ENCODE measurements at regions of chr16 and their contacts with region 1.

Region 1: DNA sequence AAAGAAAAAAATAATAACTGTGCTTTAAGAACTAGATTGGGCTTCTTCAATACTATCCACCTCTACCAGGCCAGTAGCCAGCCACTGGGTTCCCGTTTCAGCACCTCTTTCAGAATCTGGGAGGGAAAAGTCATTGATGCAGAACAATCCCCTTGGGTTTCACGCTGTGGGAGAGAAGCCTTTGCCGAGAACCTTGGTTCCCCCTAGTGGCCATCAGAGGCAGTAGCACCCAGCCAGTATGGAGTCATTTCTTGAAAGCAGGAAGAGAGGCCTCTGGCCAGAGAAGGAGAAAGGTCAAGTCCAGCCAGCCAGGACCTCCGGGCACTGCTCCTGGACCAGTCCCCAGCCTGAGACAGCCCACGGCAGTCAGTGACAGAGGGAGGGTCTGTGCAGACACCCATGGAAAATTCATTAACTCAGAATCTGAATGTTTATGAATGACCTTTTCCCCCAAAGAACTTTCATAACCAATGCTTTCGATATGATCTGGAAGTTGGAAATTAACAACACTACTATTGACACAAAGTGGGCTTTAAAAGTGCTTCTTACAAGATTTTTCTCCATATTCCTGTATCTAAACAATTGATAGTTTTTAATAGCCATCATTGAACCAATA is 51.2 kb upstream of the CDH5 start:
- DNase-seq: peak; percentile 29 to 76
- H3K4me3 ChIP-seq: no peak overlapping the region
- H3K27ac ChIP-seq: no peak overlapping the region
- H3K4me1 ChIP-seq: no peaks in the 10 kb centered on the region
- H3K27me3 ChIP-seq: no peaks in the 10 kb centered on the region
- CTCF ChIP-seq: peak; percentile 92 to 97 (median 92)
- EP300 ChIP-seq: no peak
- POLR2A ChIP-seq: no peak
- RAD21 ChIP-seq: peak; percentile 89 to 90

Region 2: DNA sequence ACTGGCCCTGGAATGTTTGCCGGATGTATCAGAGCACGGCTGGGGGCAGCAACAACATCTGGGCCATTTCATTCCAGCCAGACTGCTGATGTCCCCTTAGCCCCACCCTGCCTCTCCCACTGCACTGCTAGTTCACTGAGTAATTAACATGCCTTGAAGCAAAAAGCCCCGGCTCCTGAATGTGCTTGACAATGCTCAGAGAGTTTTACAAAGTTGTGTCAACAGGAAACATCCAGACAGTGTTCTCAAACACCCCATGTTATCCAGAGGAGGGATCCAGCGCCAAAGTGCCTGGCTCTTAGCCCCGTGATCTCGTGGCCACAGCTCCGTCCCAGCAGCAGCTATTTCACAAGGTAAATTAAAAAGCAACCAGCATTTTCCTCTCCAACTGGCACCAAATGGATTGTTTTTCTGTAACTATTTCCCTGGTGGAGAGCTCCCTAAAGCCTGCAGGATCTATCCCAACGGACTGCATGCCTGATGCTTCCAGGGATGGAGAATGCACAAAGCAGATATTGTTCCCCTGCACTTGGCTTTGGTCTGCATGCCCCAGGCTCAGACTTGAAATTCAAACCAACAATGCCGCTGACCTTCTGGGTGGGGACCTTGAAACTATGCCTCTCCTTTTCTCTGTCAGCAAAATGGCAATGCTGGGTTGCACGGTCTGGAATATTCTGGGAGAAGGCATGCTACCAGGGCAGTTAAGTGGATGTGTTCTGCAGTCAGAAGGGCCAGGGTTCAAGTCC is 64.5 kb before region 1 on chr16:
- CTCF ChIA-PET with region 1: no interaction called
- POLR2A ChIA-PET with region 1: no interaction called
- DNase-seq: no peak
- H3K4me3 ChIP-seq: no peak overlapping the region
- H3K27ac ChIP-seq: no peak overlapping the region
- H3K4me1 ChIP-seq: no peaks in the 10 kb centered on the region
- H3K27me3 ChIP-seq: no peaks in the 10 kb centered on the region
- CTCF ChIP-seq: no peak
- EP300 ChIP-seq: no peak
- POLR2A ChIP-seq: no peak
- RAD21 ChIP-seq: no peak

Region 3: DNA sequence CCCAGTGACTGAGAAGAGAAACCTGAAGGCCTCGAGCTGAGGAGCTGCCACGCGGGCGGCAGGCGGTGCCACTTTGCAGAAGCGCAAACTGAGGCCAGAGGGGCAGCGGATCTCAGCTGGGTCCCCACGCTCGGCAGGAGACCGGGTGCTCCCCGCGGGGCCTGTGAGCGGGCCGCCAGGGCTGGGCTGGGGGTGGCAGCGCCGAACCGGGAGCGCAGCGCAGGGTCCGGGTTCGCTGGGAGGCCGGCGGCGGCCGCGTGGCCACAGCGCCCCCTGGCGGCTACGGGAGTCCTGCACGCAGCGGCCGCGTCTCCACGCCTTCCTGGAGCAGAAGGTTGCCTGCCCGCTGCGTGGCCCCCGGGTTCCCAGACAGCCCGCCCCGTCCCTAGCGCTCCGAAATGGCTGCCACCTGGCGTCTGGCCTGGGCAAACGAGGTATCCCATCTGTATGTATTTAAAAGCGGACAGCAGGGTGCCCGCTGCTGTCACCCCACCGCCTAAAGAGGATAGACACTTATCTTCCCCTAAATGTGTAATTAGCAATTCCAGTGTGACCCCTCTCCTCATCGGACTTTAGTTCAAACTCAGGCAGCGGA is 44.9 kb before region 1 on chr16:
- CTCF ChIA-PET with region 1: interaction called, 30 read pairs
- POLR2A ChIA-PET with region 1: no interaction called
- DNase-seq: peak; percentile 51 to 94
- H3K4me3 ChIP-seq: peak overlapping the region; percentile 27 to 64 (median 29); a peak in 6 of 8 replicates
- H3K27ac ChIP-seq: no peak overlapping the region
- H3K4me1 ChIP-seq: peaks cover 0 to 10% (median 6%) of the 10 kb centered on the region in 4 experiments; a peak in 5 of 7 replicates
- H3K27me3 ChIP-seq: peaks cover 0 to 10% (median 3%) of the 10 kb centered on the region in 4 experiments; a peak in 5 of 7 replicates
- CTCF ChIP-seq: peak; percentile 90 to 96 (median 91)
- EP300 ChIP-seq: peak in 1 of 2 experiments; percentile 78; a peak in 1 of 3 replicates
- POLR2A ChIP-seq: no peak
- RAD21 ChIP-seq: peak; percentile 85 to 89

Region 4: DNA sequence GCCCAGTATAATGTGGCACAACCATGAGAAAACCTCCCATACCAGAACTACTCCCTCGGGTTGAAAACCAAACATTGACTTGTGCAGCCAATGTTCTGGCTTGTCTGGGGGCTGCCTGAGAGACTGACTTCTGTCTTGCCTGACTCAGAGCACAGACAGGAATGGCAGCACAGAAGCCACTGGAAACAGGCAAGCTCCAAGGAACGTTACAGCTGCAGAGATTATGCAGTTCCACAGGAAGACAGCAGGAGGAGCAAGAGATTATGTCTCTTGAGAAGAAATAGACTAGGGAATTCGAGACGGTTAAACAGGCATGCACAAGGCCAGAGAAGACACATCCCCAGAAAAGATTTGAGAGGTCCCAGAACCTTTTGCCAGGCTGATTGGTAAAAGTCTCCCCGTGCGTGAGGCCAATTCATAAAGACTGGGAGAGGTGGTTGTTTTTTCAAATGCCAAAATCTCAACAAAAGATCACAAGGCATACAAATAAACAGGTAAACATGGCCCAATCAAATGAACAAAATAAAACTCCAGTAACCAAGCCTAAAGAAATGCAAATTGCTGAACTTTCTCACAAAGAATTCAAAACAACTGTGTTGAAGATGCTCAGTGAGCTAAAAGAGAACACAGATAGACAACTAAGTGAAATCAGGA is 39.4 kb before region 1 on chr16:
- CTCF ChIA-PET with region 1: interaction called, 30 read pairs
- POLR2A ChIA-PET with region 1: no interaction called
- DNase-seq: peak; percentile 50 to 77
- H3K4me3 ChIP-seq: no peak overlapping the region
- H3K27ac ChIP-seq: no peak overlapping the region
- H3K4me1 ChIP-seq: peaks cover 0 to 5% (median 2%) of the 10 kb centered on the region in 4 experiments; a peak in 3 of 7 replicates
- H3K27me3 ChIP-seq: peaks cover 0 to 7% (median 1%) of the 10 kb centered on the region in 4 experiments; a peak in 3 of 7 replicates
- CTCF ChIP-seq: peak; percentile 11 to 83 (median 76)
- EP300 ChIP-seq: no peak
- POLR2A ChIP-seq: no peak
- RAD21 ChIP-seq: peak; percentile 61 to 73

Region 5: GRCh38 chr16:66295761-66296520 is 19.4 kb before region 1 on chr16:
- CTCF ChIA-PET with region 1: interaction called, 10 read pairs
- POLR2A ChIA-PET with region 1: no interaction called
- DNase-seq: no peak
- H3K4me3 ChIP-seq: no peak overlapping the region
- H3K27ac ChIP-seq: no peak overlapping the region
- H3K4me1 ChIP-seq: no peaks in the 10 kb centered on the region
- H3K27me3 ChIP-seq: no peaks in the 10 kb centered on the region
- CTCF ChIP-seq: no peak
- EP300 ChIP-seq: no peak
- POLR2A ChIP-seq: no peak
- RAD21 ChIP-seq: no peak

Region 6: GRCh38 chr16:66326991-66327513 is 11.7 kb after region 1 on chr16:
- CTCF ChIA-PET with region 1: interaction called, 14 read pairs
- POLR2A ChIA-PET with region 1: no interaction called
- DNase-seq: no peak
- H3K4me3 ChIP-seq: no peak overlapping the region
- H3K27ac ChIP-seq: no peak overlapping the region
- H3K4me1 ChIP-seq: peaks cover 2 to 10% (median 4%) of the 10 kb centered on the region in 4 experiments; a peak in 6 of 7 replicates
- H3K27me3 ChIP-seq: no peaks in the 10 kb centered on the region
- CTCF ChIP-seq: no peak
- EP300 ChIP-seq: no peak
- POLR2A ChIP-seq: no peak
- RAD21 ChIP-seq: no peak

Region 7: DNA sequence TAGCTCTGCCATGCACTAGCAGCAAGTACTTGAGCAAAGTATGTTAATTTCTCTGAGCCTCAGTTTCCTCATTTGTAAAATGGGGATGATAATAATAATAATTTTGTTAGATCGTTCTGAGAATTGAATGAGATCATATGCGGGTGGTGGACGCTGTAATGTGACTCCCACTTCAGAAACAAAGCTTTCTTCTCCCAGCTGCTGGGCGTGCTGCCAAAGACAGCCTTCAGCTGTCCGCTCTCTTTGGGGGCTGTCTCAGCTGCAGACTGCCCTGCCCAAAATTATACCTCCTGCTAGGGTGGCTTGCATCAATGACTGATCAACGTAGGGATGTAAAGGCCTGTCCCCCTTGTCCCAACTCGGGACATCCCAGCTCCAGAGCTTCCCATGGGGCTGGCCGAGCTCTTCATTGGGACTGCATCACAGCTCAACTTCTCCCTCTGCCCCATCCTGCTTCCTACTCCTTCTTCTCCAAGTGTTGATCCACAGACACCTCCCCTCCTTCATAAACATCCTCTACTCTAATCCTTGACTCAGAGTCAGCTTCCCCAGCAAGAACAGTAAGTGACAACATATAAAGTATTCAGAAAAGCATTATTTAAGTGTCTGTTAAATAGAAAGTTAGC is 20.5 kb after region 1 on chr16:
- CTCF ChIA-PET with region 1: interaction called, 271 read pairs
- POLR2A ChIA-PET with region 1: no interaction called
- DNase-seq: no peak
- H3K4me3 ChIP-seq: no peak overlapping the region
- H3K27ac ChIP-seq: no peak overlapping the region
- H3K4me1 ChIP-seq: no peaks in the 10 kb centered on the region; a peak in 1 of 7 replicates
- H3K27me3 ChIP-seq: no peaks in the 10 kb centered on the region
- CTCF ChIP-seq: no peak
- EP300 ChIP-seq: no peak
- POLR2A ChIP-seq: no peak
- RAD21 ChIP-seq: no peak

Region 8: DNA sequence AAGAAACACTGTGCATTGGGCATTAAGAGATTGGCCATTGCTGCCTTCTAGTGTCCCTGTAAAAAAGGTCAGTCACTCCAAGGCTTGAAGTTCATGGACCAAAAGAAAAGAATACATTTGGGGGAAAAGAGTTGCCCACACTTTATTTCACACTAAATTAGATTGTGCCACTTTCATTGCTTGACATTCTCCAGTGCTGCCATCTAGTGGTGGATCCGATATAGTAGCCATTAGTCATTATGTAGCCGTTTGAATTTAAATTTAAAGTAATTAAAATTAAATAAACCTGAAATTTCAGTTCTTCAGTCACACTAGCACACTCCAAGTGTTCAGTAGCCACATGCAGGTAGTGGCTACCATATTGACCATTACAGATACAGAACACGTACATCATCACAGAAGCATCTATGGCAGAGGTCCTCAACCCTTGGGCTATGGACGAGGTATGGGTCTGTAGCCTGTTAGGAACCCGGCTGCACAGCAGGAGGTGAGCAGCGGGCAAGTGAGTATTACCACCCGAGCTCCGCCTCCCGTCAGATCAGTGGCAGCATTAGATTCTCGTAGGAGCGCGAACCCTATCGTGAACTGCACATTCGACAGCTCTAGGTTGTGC is 29.3 kb after region 1 on chr16:
- CTCF ChIA-PET with region 1: interaction called, 271 read pairs
- POLR2A ChIA-PET with region 1: no interaction called
- DNase-seq: no peak
- H3K4me3 ChIP-seq: no peak overlapping the region
- H3K27ac ChIP-seq: no peak overlapping the region
- H3K4me1 ChIP-seq: peaks cover 0 to 6% (median under 1%) of the 10 kb centered on the region in 4 experiments; a peak in 2 of 7 replicates
- H3K27me3 ChIP-seq: no peaks in the 10 kb centered on the region
- CTCF ChIP-seq: peak in 2 of 3 experiments; percentile 43 to 49; a peak in 2 of 4 replicates
- EP300 ChIP-seq: no peak
- POLR2A ChIP-seq: no peak
- RAD21 ChIP-seq: peak; percentile 23 to 27; a peak in 2 of 4 replicates

Region 9: DNA sequence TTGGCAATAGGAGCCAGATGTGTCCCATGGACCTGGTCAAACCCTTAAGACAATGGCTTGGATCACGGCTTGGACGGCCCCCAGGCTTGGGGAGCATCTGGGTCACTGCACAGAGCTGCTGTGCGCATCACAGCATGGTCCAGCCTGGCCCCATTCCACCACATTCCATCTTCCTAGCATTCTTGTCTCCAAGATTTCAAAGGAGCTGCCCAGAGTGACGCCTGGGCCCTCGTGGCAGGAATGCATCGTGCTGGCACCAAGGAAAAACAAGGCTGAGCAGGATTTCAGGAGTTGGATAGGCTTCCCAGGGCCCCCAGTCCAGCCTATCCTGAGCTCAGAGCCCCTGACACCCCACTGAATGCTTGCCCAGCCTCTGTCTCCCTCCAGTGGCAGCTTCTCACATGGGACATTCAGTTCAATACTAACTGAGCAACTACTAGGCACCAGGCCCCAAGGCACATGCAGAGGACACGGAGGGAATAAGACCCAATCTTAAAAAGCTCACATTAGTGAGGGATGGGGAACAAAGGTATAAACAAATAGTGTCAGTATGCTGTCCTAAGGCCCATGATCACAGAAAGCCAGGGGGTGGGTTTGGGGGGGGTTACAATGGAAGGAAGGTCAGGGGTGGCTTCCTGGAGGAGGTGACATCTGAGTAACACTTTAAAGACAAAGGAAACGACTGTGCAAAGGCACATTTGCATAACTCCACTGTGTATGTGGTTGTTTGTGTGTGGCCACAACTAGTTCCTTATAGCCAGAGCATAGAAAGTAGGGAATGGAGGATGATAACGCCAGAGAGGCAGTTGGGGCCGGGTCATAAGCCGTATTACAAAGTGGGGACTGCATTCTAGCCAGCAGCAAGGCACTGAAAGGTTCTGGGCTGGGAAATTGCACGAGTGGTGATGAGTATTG is 200.5 kb after region 1 on chr16:
- CTCF ChIA-PET with region 1: no interaction called
- POLR2A ChIA-PET with region 1: no interaction called
- DNase-seq: peak; percentile 13 to 60
- H3K4me3 ChIP-seq: no peak overlapping the region
- H3K27ac ChIP-seq: no peak overlapping the region
- H3K4me1 ChIP-seq: peaks cover 7 to 19% (median 9%) of the 10 kb centered on the region in 4 experiments; a peak in 6 of 7 replicates
- H3K27me3 ChIP-seq: no peaks in the 10 kb centered on the region
- CTCF ChIP-seq: peak; percentile 51 to 69 (median 67)
- EP300 ChIP-seq: no peak
- POLR2A ChIP-seq: no peak
- RAD21 ChIP-seq: peak; percentile 73 to 86

Measured in H1 (cell line).